ENCODE measurements at regions of chr6 and their contacts with region 1.

Region 1: GRCh38 chr6:86128130-86128814 is 485.6 kb upstream of the SYNCRIP start:
- DNase-seq: no peak
- ATAC-seq: no peak
- H3K4me3 ChIP-seq: no peak overlapping the region
- H3K27ac ChIP-seq: no peak overlapping the region
- H3K4me1 ChIP-seq: no peaks in the 10 kb centered on the region
- H3K27me3 ChIP-seq: 0 out of 2 replicates have a peak, but pooled peaks cover 3% of the 10 kb centered on the region
- CTCF ChIP-seq: no peak
- POLR2A ChIP-seq: no peak
- RAD21 ChIP-seq: no peak

Region 2: DNA sequence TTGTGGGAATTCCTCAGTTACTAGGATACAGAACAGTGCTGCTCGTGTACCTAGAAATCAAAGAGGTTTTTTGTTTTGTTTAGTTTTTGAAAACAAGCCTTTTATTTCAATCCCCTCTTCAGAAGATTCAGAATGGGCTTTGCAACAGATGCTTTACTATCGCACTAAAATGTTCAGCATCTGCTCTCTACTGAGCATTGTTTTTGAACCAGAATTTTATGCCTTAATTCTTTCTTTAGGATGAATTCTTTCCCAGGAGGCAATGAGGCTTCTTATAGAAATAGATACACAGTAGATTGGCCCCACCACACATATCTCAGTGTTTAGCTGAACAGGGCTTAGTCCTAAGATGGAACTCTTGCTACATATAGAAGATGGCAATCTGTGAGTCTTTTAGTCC is 1823.5 kb after region 1 on chr6:
- CTCF ChIA-PET with region 1: no interaction called
- POLR2A ChIA-PET with region 1: no interaction called
- RAD21 ChIA-PET with region 1: no interaction called
- intact Hi-C with region 1: loop called (anchors 10 kb)
- DNase-seq: no peak
- ATAC-seq: no peak
- H3K4me3 ChIP-seq: no peak overlapping the region
- H3K27ac ChIP-seq: no peak overlapping the region
- H3K4me1 ChIP-seq: no peaks in the 10 kb centered on the region
- H3K27me3 ChIP-seq: peaks cover 38% of the 10 kb centered on the region
- CTCF ChIP-seq: no peak
- POLR2A ChIP-seq: no peak
- RAD21 ChIP-seq: no peak

Measured in HCT116 (cell line).